ENCODE measurements at regions of chr4 and their contacts with region 1.

Region 1: GRCh38 chr4:79917246-79917645 is 155.8 kb downstream of the ANTXR2 start:
- DNase-seq: peak; percentile 49
- ATAC-seq: peak; percentile 49
- H3K4me3 ChIP-seq: no peak overlapping the region
- H3K4me3 Mint-ChIP-seq: no peak overlapping the region
- H3K27ac ChIP-seq: no peak overlapping the region
- H3K27ac Mint-ChIP-seq: no peak overlapping the region
- H3K4me1 ChIP-seq: no peaks in the 10 kb centered on the region
- H3K4me1 Mint-ChIP-seq: no peaks in the 10 kb centered on the region
- H3K27me3 ChIP-seq: no peaks in the 10 kb centered on the region
- H3K27me3 Mint-ChIP-seq: no peaks in the 10 kb centered on the region
- CTCF ChIP-seq: peak; percentile 71

Region 2: GRCh38 chr4:77959566-77960338 is 1957.5 kb before region 1 on chr4:
- CTCF ChIA-PET with region 1: no interaction called
- POLR2A ChIA-PET with region 1: no interaction called
- intact Hi-C with region 1: loop called (anchors 10 kb)
- DNase-seq: peak; percentile 57
- ATAC-seq: no peak
- H3K4me3 ChIP-seq: no peak overlapping the region
- H3K4me3 Mint-ChIP-seq: no peak overlapping the region
- H3K27ac ChIP-seq: no peak overlapping the region
- H3K27ac Mint-ChIP-seq: no peak overlapping the region
- H3K4me1 ChIP-seq: no peaks in the 10 kb centered on the region
- H3K4me1 Mint-ChIP-seq: no peaks in the 10 kb centered on the region
- H3K27me3 ChIP-seq: no peaks in the 10 kb centered on the region
- H3K27me3 Mint-ChIP-seq: no peaks in the 10 kb centered on the region
- CTCF ChIP-seq: peak; percentile 80

Region 3: DNA sequence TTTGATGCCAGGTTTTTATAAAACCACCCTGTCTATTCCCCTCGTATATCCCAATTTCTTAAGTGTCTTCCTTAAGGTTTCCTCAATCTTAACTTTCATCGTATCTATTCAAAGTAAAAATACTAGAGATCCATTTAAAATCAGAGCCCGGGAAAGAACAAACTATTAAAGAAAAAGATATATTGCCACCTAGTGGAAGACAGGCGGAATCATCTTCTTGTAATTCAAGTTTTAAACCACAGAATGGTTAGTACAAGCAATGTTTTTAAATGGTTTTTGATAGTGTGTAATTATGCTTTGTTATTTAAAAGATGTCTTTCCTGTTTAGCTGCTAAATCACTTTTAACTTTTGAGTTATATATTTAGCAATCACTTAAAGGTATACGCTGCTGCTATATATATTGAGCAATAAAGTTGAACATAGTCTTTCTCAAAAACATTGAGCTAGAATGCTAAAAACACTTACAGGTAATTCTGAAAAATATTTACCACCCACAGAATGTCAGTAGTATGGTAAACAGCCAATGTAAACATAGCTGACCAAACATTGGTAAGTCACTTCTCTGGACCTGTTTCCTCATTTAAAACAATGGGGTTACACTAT is 298.3 kb after region 1 on chr4:
- CTCF ChIA-PET with region 1: interaction called, 11 read pairs
- POLR2A ChIA-PET with region 1: no interaction called
- intact Hi-C with region 1: loop called (anchors 1 kb)
- DNase-seq: peak; percentile 54
- ATAC-seq: peak; percentile 33
- H3K4me3 ChIP-seq: no peak overlapping the region
- H3K4me3 Mint-ChIP-seq: no peak overlapping the region
- H3K27ac ChIP-seq: no peak overlapping the region
- H3K27ac Mint-ChIP-seq: no peak overlapping the region
- H3K4me1 ChIP-seq: no peaks in the 10 kb centered on the region
- H3K4me1 Mint-ChIP-seq: peaks cover 1% of the 10 kb centered on the region
- H3K27me3 ChIP-seq: peaks cover 0 to 9% (median 3%) of the 10 kb centered on the region in 4 experiments
- H3K27me3 Mint-ChIP-seq: peaks cover 20% of the 10 kb centered on the region
- CTCF ChIP-seq: peak; percentile 84